ENCODE measurements at regions of chr12 and their contacts with region 1.

Region 1: GRCh38 chr12:121793838-121794533 is 498 bp upstream of the RHOF start:
- DNase-seq: peak; percentile 98
- ATAC-seq: peak; percentile 63
- H3K4me3 Mint-ChIP-seq: peak overlapping the region; percentile 96
- H3K27ac Mint-ChIP-seq: peak overlapping the region; percentile 92
- H3K4me1 Mint-ChIP-seq: peaks cover 56% of the 10 kb centered on the region
- H3K27me3 Mint-ChIP-seq: no peaks in the 10 kb centered on the region

Region 2: GRCh38 chr12:121467115-121467793 is 326.7 kb before region 1 on chr12:
- CTCF ChIA-PET with region 1: interaction called, 3 read pairs
- POLR2A ChIA-PET with region 1: no interaction called
- intact Hi-C with region 1: loop called in 1 of 2 experiments (anchors 10 kb)
- DNase-seq: peak; percentile 93
- ATAC-seq: peak; percentile 94
- H3K4me3 Mint-ChIP-seq: peak overlapping the region; percentile 57
- H3K27ac Mint-ChIP-seq: no peak overlapping the region
- H3K4me1 Mint-ChIP-seq: peaks cover 20% of the 10 kb centered on the region
- H3K27me3 Mint-ChIP-seq: no peaks in the 10 kb centered on the region

Region 3: GRCh38 chr12:121712461-121713256 is 81.3 kb before region 1 on chr12 and contains the start of gene TMEM120B:
- CTCF ChIA-PET with region 1: interaction called, 40 read pairs
- POLR2A ChIA-PET with region 1: interaction called, 3 read pairs
- intact Hi-C with region 1: loop called (anchors 1 to 5 kb)
- DNase-seq: peak; percentile 90
- ATAC-seq: peak; percentile 87
- H3K4me3 Mint-ChIP-seq: peak within 1 kb of the TSS; percentile 95
- H3K27ac Mint-ChIP-seq: peak within 1 kb of the TSS; percentile 91
- H3K4me1 Mint-ChIP-seq: peaks cover 16% of the 10 kb centered on the region
- H3K27me3 Mint-ChIP-seq: no peaks in the 10 kb centered on the region
- total RNA-seq, gene TMEM120B: 8.8 to 11.7 TPM

Region 4: GRCh38 chr12:121811434-121812319 is 17.7 kb after region 1 on chr12:
- CTCF ChIA-PET with region 1: interaction called, 439 read pairs
- POLR2A ChIA-PET with region 1: interaction called, 32 read pairs
- intact Hi-C with region 1: loop called (anchors 1 kb)
- DNase-seq: peak; percentile 82
- ATAC-seq: peak; percentile 86
- H3K4me3 Mint-ChIP-seq: peak overlapping the region; percentile 73
- H3K27ac Mint-ChIP-seq: peak overlapping the region; percentile 69
- H3K4me1 Mint-ChIP-seq: peaks cover 40% of the 10 kb centered on the region
- H3K27me3 Mint-ChIP-seq: no peaks in the 10 kb centered on the region

Region 5: GRCh38 chr12:121893961-121894460 is 100.0 kb after region 1 on chr12:
- CTCF ChIA-PET with region 1: interaction called, 82 read pairs
- POLR2A ChIA-PET with region 1: interaction called, 5 read pairs
- intact Hi-C with region 1: no loop called
- DNase-seq: peak; percentile 61
- ATAC-seq: peak; percentile 82
- H3K4me3 Mint-ChIP-seq: peak overlapping the region; percentile 8
- H3K27ac Mint-ChIP-seq: peak overlapping the region; percentile 86
- H3K4me1 Mint-ChIP-seq: peaks cover 43% of the 10 kb centered on the region
- H3K27me3 Mint-ChIP-seq: no peaks in the 10 kb centered on the region

Region 6: GRCh38 chr12:121942145-121942718 is 148.2 kb after region 1 on chr12:
- CTCF ChIA-PET with region 1: no interaction called
- POLR2A ChIA-PET with region 1: no interaction called
- intact Hi-C with region 1: no loop called
- DNase-seq: no peak
- ATAC-seq: no peak
- H3K4me3 Mint-ChIP-seq: no peak overlapping the region
- H3K27ac Mint-ChIP-seq: no peak overlapping the region
- H3K4me1 Mint-ChIP-seq: peaks cover 2% of the 10 kb centered on the region
- H3K27me3 Mint-ChIP-seq: no peaks in the 10 kb centered on the region

Region 7: GRCh38 chr12:122174155-122174845 is 380.3 kb after region 1 on chr12 and contains the start of gene IL31:
- CTCF ChIA-PET with region 1: no interaction called
- POLR2A ChIA-PET with region 1: no interaction called
- intact Hi-C with region 1: no loop called
- DNase-seq: peak; percentile 42
- ATAC-seq: peak; percentile 74
- H3K4me3 Mint-ChIP-seq: no peak within 1 kb of the TSS
- H3K27ac Mint-ChIP-seq: no peak within 1 kb of the TSS
- H3K4me1 Mint-ChIP-seq: peaks cover 6% of the 10 kb centered on the region
- H3K27me3 Mint-ChIP-seq: no peaks in the 10 kb centered on the region
- total RNA-seq, gene IL31: 2.1 to 4.0 TPM